CD4-positive, alpha-beta memory T cell (primary cell): ENCODE measurements at regions of chr5 and their contacts with region 1.

Region 1: DNA sequence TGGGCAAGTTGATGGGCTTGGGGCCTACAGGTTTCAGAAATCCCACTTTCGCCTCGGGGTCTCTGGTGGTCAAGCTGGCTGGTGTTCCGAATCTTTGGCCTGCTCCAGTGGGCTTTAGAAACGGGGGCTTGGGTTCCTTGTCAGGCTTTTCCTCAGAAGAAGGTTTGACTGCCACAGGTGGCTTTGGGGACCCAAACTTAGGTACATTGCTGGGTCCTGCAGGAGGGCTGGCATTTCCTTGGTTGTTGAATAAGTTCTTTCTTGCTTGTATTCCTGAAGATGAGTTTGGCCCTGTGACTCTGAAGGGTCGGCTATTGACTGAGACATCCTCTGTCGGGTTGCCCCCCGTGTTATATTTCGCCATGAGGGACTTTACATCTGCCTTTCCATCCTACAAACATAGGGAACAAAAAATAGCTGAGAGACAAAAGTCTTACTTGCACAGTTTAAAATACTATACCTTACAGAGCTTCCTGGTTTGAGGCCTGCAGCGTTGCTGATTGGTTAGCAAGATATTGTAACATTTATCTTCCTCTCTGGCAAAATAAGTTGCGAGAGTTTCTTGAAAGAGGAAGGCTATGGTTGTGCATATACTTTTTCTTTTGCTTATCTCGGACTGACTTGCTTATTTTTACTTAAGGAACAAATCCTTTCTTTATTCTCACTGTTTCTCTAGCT is 16.6 kb downstream of the FYB1 start:
- DNase-seq: peak; percentile 59 to 70 (median 67)
- H3K4me3 ChIP-seq: peak overlapping the region; percentile 74 to 96
- H3K4me3 Mint-ChIP-seq: peak overlapping the region; percentile 94 to 100 (median 98)
- H3K27ac ChIP-seq: peak overlapping the region; percentile 84
- H3K27ac Mint-ChIP-seq: peak overlapping the region; percentile 91 to 99 (median 96)
- H3K4me1 ChIP-seq: peaks cover 44% of the 10 kb centered on the region
- H3K4me1 Mint-ChIP-seq: peaks cover 31 to 51% (median 40%) of the 10 kb centered on the region in 4 donors
- H3K27me3 ChIP-seq: no peaks in the 10 kb centered on the region
- H3K27me3 Mint-ChIP-seq: no peaks in the 10 kb centered on the region

Region 2: DNA sequence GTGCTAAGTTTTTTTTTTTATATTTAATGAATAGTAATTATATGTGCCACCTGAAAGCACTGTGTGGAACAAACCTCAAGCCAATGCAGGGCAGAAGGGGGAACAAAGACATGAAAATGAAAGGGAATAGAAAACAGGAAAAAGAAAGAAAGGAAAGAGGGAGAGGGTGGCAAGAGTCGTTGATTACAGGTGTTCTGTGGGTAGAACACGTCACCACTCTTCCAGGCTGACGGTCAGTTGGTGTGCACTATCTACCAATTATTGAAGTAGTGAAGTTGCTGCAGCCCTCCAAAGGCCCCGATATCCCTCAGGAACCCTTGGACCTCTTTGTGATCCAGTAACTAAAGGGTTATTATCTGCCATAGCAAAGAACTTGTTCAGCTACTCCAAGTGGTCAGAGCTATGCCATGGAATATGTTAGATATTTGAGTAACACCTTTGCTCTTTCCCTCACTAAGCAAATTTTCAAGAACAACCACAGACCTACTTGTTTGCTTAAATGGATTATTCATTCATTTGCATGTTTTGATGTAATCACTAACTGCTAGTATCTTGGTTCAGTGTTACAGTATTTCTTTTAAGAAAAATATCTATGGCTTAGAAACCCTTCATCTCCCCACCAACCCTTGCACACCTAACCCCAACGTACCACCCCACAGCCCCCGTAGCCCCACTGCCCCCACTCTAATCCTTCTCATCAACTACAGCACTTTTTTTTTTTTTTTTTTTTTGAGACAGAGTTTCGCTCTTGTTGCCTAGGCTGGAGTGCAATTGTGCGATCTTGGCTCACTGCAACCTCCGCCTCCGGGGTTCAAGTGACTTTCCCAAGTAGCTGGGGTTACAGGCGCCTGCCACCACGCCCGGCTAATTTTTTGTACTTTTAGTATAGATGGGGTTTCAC is 14.7 kb before region 1 on chr5:
- CTCF ChIA-PET with region 1: interaction called, 79 read pairs
- POLR2A ChIA-PET with region 1: interaction called, 1,810 read pairs
- intact Hi-C with region 1: loop called (anchors 1 kb)
- DNase-seq: peak in 2 of 5 donors; percentile 58 to 70
- H3K4me3 ChIP-seq: peak overlapping the region in 1 of 2 donors; percentile 9
- H3K4me3 Mint-ChIP-seq: peak overlapping the region; percentile 84 to 96 (median 90)
- H3K27ac ChIP-seq: peak overlapping the region; percentile 59
- H3K27ac Mint-ChIP-seq: peak overlapping the region; percentile 95 to 99 (median 99)
- H3K4me1 ChIP-seq: peaks cover 98% of the 10 kb centered on the region
- H3K4me1 Mint-ChIP-seq: peaks cover 71 to 96% (median 83%) of the 10 kb centered on the region in 4 donors
- H3K27me3 ChIP-seq: no peaks in the 10 kb centered on the region
- H3K27me3 Mint-ChIP-seq: no peaks in the 10 kb centered on the region

Region 3: GRCh38 chr5:39274398-39275085 is 71.8 kb after region 1 on chr5:
- CTCF ChIA-PET with region 1: interaction called, 10 read pairs
- POLR2A ChIA-PET with region 1: interaction called, 39 read pairs
- intact Hi-C with region 1: no loop called
- DNase-seq: peak; percentile 36 to 53 (median 41)
- H3K4me3 ChIP-seq: peak overlapping the region; percentile 20 to 25
- H3K4me3 Mint-ChIP-seq: peak overlapping the region; percentile 72 to 89 (median 85)
- H3K27ac ChIP-seq: peak overlapping the region; percentile 73
- H3K27ac Mint-ChIP-seq: peak overlapping the region; percentile 90 to 98 (median 96)
- H3K4me1 ChIP-seq: peaks cover 54% of the 10 kb centered on the region
- H3K4me1 Mint-ChIP-seq: peaks cover 37 to 71% (median 51%) of the 10 kb centered on the region in 4 donors
- H3K27me3 ChIP-seq: no peaks in the 10 kb centered on the region
- H3K27me3 Mint-ChIP-seq: no peaks in the 10 kb centered on the region